ENCODE measurements at regions of chr10 and their contacts with region 1.

Region 1: GRCh38 chr10:122565728-122566206 is 5.2 kb downstream of the DMBT1 start:
- DNase-seq: peak; percentile 79
- ATAC-seq: peak; percentile 87
- H3K4me3 ChIP-seq: no peak overlapping the region
- H3K27ac ChIP-seq: no peak overlapping the region
- H3K4me1 ChIP-seq: no peaks in the 10 kb centered on the region
- H3K27me3 ChIP-seq: peaks cover 18% of the 10 kb centered on the region
- CTCF ChIP-seq: peak; percentile 91
- POLR2A ChIP-seq: 0 out of 2 replicates have a peak, but pooled peaks have one; percentile 45
- RAD21 ChIP-seq: peak; percentile 91

Region 2: DNA sequence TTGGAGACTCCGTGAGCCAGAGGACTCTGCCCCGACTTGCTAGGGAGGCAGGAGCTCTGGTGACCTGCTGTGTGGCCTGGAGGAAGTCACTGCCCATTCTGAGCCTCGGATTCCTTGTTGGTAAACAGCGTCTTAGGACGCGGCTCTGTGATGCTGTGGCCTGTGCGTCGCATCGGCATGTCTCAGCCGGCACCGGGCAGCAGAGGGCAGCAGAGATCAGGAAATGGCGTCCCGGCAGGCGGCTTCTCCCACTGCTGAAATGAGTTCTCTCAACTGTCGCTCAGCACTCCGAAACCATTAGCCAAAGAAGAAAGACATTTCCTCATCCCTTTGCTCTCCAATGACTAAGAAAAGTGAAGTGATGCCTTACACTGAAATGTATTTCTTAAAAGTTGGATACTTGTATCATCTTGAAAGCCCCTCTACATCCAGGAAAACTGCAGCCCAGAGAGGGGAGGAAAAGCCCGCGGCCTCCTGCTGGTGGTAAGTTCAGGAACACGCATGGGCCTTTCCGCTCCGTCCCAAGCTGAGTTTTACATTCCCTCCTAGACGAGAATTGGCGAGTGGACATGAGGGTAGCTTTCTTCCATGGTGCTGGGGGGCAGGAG is 1622.9 kb before region 1 on chr10:
- CTCF ChIA-PET with region 1: no interaction called
- POLR2A ChIA-PET with region 1: no interaction called
- dilution Hi-C with region 1: no loop called
- in situ Hi-C with region 1: no loop called
- intact Hi-C with region 1: loop called (anchors 10 kb)
- DNase-seq: peak; percentile 57
- ATAC-seq: peak; percentile 100
- H3K4me3 ChIP-seq: no peak overlapping the region
- H3K27ac ChIP-seq: no peak overlapping the region
- H3K4me1 ChIP-seq: no peaks in the 10 kb centered on the region
- H3K27me3 ChIP-seq: no peaks in the 10 kb centered on the region; the same call in none of the 2 replicates
- CTCF ChIP-seq: peak; percentile 90
- POLR2A ChIP-seq: no peak; the same call in 1 of the 2 replicates
- RAD21 ChIP-seq: peak; percentile 87

Region 3: DNA sequence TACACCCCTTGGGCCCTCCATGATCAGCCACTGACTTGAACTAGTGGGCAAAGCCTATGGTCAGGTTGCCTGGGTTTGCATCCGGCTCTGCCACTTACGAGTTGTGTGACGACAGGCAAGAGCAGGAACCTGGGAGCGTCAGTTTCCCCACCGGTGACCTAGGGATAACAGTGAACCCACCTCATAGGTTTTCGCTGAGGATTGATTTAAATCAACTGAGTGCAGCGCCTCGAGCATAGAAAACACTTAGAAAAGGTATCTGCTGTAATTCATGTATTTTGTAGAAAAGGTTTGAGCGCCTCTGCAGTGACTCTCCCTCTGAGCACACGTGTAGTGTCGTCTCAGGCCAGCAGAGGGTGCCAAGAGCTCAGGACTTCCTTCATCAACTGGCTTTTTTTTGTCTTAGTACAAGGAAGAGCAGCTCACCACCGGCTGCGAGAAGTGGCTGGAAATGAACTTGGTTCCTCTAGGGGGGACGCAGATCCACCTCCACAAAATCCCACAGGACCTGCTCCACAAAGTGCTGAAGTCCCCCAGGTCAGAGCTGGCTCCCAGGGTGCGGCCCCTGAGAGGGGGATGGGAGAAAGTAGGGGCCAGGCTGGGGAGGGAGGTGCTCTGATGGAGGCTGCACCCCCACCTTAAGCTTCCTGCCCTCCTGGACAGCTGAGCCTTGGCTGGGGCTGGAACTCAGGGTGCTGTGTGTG is 267.0 kb before region 1 on chr10:
- CTCF ChIA-PET with region 1: interaction called, 10 read pairs
- POLR2A ChIA-PET with region 1: no interaction called
- dilution Hi-C with region 1: no loop called
- in situ Hi-C with region 1: loop called (anchors 5 kb)
- intact Hi-C with region 1: loop called (anchors 1 kb)
- DNase-seq: peak; percentile 72
- ATAC-seq: peak; percentile 99
- H3K4me3 ChIP-seq: no peak overlapping the region
- H3K27ac ChIP-seq: no peak overlapping the region
- H3K4me1 ChIP-seq: peaks cover 5% of the 10 kb centered on the region
- H3K27me3 ChIP-seq: peaks cover 15% of the 10 kb centered on the region; the same call in 1 of the 2 replicates
- CTCF ChIP-seq: peak; percentile 95
- POLR2A ChIP-seq: 0 out of 2 replicates have a peak, but pooled peaks have one; percentile 34
- RAD21 ChIP-seq: peak; percentile 98

Region 4: DNA sequence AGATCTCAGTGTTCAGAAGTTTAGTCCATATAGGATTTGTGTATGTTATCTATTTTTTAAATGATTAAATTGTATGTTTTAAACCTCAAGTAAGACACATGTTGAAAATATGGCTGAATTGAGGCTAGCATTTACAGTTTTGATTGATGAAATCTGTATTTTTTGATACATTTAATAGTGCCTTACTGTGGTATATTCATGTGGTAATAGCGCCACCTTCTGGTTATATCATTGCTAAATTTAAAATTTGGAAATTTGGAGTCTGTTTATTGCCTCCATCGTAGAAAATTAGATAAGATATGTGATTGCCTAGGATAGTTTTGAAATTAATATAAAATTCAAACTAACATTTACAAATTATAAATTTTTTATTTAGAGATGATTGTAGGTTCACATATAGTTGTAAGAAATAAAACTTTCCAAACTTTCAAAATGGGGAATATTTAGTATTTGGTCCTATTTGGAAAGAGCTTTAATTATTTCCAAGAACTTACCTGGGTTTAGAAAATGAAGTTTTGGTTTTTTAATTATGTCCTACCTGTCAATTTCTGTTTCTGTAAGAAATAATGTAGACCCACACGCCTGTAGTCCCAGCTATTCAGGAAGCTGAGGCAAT is 130.4 kb before region 1 on chr10:
- CTCF ChIA-PET with region 1: interaction called, 10 read pairs
- POLR2A ChIA-PET with region 1: no interaction called
- dilution Hi-C with region 1: no loop called
- in situ Hi-C with region 1: no loop called
- intact Hi-C with region 1: loop called (anchors 1 kb)
- DNase-seq: peak; percentile 55
- ATAC-seq: peak; percentile 46
- H3K4me3 ChIP-seq: no peak overlapping the region
- H3K27ac ChIP-seq: no peak overlapping the region
- H3K4me1 ChIP-seq: no peaks in the 10 kb centered on the region
- H3K27me3 ChIP-seq: no peaks in the 10 kb centered on the region
- CTCF ChIP-seq: peak; percentile 78
- POLR2A ChIP-seq: no peak
- RAD21 ChIP-seq: peak; percentile 85

Region 5: DNA sequence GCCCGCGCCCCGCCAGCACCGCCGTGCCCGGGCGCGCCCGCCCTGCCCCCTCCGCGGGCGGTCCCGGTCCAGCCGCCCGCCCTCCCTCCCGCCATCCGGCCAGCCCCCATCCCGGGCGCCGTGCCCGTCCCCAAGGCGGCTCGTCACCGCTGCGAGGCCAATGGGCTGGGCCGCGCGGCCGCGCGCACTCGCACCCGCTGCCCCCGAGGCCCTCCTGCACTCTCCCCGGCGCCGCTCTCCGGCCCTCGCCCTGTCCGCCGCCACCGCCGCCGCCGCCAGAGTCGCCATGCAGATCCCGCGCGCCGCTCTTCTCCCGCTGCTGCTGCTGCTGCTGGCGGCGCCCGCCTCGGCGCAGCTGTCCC is 104.4 kb before region 1 on chr10 and contains the start of gene HTRA1:
- CTCF ChIA-PET with region 1: interaction called, 14 read pairs
- POLR2A ChIA-PET with region 1: no interaction called
- dilution Hi-C with region 1: no loop called
- in situ Hi-C with region 1: loop called (anchors 10 kb)
- intact Hi-C with region 1: loop called (anchors 2 kb)
- DNase-seq: peak; percentile 61
- ATAC-seq: peak; percentile 82
- H3K4me3 ChIP-seq: peak within 1 kb of the TSS; percentile 52
- H3K27ac ChIP-seq: peak within 1 kb of the TSS; percentile 34
- H3K4me1 ChIP-seq: peaks cover 12% of the 10 kb centered on the region
- H3K27me3 ChIP-seq: peaks cover 2% of the 10 kb centered on the region
- CTCF ChIP-seq: no peak
- POLR2A ChIP-seq: no peak
- RAD21 ChIP-seq: no peak
- total RNA-seq, gene HTRA1: 23.1 and 28.5 TPM in 2 replicates

Measured in IMR-90 (cell line).